Activated CD4-positive, alpha-beta T cell treated with anti-CD3 and anti-CD28 coated beads for 36 hours (primary cell): ENCODE measurements at regions of chr13 and their contacts with region 1.

Region 1: GRCh38 chr13:42497798-42498197 is 76.2 kb upstream of the TNFSF11 start:
- DNase-seq: peak; percentile 56
- ATAC-seq: peak; percentile 86
- H3K4me3 Mint-ChIP-seq: no peak overlapping the region
- H3K27ac Mint-ChIP-seq: peak overlapping the region; percentile 71
- H3K4me1 Mint-ChIP-seq: peaks cover 54% of the 10 kb centered on the region
- H3K27me3 Mint-ChIP-seq: no peaks in the 10 kb centered on the region

Region 2: DNA sequence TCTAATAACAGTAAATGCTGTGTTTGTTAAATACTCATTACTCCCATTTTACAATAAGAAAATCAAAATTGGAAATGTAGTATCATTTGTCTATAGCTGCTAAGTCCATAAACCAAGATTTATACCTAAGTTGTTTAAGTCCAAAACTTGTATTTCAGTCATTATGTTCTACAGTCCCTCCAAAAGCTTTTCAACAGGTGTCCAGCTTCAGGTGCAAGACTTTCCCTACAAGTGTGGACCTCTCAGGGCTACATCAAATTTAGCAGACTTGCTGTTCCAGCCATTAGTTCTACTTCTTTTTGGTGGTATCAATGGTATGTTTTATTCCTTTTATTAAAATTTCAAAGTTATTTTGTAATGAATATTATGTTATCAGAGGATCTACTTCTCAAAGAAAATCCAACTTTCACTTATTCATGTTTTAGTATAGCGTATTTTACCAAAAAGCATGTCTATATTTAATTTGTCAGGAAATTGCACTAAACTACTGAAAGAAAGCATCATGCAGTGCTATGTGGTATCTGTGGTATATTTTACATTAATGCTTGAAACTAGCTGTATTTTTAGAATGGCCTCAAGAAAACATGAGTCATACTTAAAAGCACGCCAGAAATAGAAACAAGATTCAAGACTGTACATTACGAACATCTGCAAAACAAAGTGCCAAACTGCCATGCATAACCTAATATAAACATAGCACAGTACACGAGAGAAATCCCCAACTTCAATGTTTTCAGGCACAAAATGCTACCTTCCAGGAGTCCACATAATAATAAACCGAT is 581.4 kb before region 1 on chr13:
- CTCF ChIA-PET with region 1: no interaction called
- POLR2A ChIA-PET with region 1: no interaction called
- intact Hi-C with region 1: loop called in 1 of 2 experiments (anchors 5 kb)
- DNase-seq: no peak
- ATAC-seq: peak; percentile 66
- H3K4me3 Mint-ChIP-seq: peak overlapping the region; percentile 57
- H3K27ac Mint-ChIP-seq: peak overlapping the region; percentile 97
- H3K4me1 Mint-ChIP-seq: peaks cover 67% of the 10 kb centered on the region
- H3K27me3 Mint-ChIP-seq: no peaks in the 10 kb centered on the region

Region 3: DNA sequence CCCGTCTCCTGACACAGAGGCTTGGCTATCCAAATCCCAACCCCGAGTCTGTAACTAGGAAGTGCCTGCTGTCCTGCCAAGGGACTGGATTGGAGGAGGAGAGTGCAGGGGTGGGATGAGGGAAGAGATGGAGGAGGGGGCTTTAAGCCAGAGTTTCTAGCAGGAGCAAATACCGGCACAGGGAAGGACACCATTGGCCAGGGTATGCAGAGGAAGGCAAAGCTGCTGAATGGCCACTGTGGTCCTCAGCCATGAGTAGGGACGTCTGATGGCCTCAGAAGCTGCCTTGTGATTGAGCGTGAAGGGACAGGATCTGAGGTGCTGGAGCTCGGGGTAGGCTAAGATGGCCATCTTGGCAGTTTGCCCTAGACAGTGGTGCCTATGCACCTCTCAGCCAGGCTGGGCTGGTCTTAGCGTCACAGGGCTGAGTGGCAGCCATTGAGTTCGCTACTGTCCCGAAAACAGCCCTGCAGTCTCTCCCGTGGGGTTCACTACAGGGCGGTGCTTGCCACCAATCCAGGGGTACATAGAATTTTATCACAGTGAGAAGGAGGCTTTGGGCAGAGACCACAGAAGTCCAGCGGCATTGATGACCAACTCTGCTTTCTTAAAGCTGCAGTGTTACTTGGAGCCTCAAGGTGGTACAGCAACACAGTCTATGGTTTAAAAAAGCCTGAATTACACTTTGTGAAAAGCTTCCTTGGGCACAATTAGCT is 164.0 kb before region 1 on chr13:
- CTCF ChIA-PET with region 1: interaction called, 3 read pairs
- POLR2A ChIA-PET with region 1: no interaction called
- intact Hi-C with region 1: loop called in 1 of 2 experiments (anchors 5 kb)
- DNase-seq: no peak
- ATAC-seq: peak; percentile 79
- H3K4me3 Mint-ChIP-seq: no peak overlapping the region
- H3K27ac Mint-ChIP-seq: peak overlapping the region; percentile 76
- H3K4me1 Mint-ChIP-seq: peaks cover 41% of the 10 kb centered on the region
- H3K27me3 Mint-ChIP-seq: no peaks in the 10 kb centered on the region

Region 4: GRCh38 chr13:42377640-42378382 is 120.0 kb before region 1 on chr13:
- CTCF ChIA-PET with region 1: interaction called, 7 read pairs
- POLR2A ChIA-PET with region 1: interaction called, 6 read pairs
- intact Hi-C with region 1: loop called (anchors 1 to 2 kb)
- DNase-seq: peak; percentile 60
- ATAC-seq: peak; percentile 83
- H3K4me3 Mint-ChIP-seq: no peak overlapping the region
- H3K27ac Mint-ChIP-seq: peak overlapping the region; percentile 97
- H3K4me1 Mint-ChIP-seq: peaks cover 74% of the 10 kb centered on the region
- H3K27me3 Mint-ChIP-seq: no peaks in the 10 kb centered on the region

Region 5: DNA sequence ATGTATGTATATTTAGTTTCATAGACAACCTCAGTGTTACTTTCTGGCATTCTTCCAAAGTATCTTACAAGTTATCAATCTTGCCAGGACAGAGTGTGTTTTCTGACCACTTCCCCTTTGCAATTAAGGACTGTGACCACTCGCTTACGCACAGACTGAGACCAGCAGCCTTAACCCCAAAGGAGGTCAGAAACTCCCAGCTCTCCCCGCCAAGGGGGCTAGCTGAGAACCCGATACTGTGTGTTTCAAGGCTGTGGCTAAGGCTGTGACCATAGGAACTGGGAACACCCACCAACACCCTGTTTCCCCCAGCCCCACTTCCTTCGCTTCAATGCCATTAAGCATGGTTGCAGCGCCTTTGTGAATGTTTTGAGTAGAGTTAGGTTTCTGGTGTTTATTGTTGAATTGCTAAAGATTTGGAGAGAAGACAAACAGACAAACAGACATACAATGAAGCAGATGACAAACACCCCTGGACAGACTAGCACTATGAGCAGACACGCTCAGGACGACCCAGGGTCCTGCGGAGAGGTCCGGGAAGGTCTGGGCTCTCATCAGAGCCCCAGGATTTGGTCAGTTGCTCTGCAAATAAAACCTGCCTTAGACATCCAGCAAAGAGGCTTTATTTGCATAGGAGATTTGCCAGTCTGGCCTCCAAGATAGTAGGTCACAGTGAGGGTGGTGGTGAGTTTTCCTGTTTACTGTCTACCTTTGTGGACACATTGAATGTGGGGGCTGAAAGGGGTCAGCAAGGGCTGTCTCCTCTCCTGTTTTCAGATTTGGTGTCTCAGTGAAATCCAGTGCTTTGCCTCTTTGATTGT is 51.1 kb after region 1 on chr13:
- CTCF ChIA-PET with region 1: no interaction called
- POLR2A ChIA-PET with region 1: interaction called, 3 read pairs
- intact Hi-C with region 1: loop called in 1 of 2 experiments (anchors 5 kb)
- DNase-seq: no peak
- ATAC-seq: no peak
- H3K4me3 Mint-ChIP-seq: no peak overlapping the region
- H3K27ac Mint-ChIP-seq: no peak overlapping the region
- H3K4me1 Mint-ChIP-seq: peaks cover 20% of the 10 kb centered on the region
- H3K27me3 Mint-ChIP-seq: peaks cover 2% of the 10 kb centered on the region

Region 6: DNA sequence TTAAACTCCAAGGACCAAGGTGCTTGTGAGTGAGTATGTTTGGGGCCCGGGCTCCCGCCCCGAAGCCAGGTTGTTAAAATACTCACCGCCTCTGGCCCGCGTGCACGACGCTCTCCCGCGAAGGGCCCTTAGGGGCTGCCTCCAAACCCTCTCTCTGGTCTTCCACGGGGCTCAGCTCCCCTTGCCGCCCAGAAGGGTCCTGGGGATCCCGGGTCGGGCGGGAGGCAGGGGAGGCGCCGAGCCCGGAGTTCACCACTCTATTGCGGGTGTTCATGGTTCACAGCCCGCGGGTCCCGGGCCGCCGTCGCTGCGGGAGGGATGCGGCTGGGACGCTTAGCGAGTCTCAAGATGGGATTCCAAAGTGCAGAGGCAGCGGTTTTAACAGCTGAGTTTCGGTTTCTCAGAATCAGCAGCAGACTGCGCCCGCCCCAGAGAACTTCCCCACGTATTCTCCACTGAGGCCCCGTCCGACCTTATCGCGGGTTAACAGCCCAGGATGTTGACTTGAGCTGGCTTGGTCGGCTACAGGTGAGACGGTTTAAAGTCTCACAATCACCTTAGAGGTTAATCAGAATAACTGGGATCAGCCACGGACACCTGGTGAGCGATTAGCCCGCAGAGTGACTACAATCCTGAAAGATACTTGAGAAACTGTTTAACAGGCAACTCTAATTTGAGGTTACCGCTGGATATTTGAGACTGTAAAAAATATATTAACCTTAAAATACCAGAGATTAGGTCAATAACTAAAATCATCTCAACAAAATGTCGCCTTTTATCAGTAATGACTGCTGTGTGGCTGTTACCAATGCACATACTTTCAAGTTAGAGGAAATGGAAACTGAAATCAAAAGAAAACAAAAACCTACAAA is 494.3 kb after region 1 on chr13 and contains the start of gene EPSTI1:
- CTCF ChIA-PET with region 1: no interaction called
- POLR2A ChIA-PET with region 1: no interaction called
- intact Hi-C with region 1: loop called in 1 of 2 experiments (anchors 1 kb)
- DNase-seq: peak; percentile 87
- ATAC-seq: peak; percentile 81
- H3K4me3 Mint-ChIP-seq: peak within 1 kb of the TSS; percentile 84
- H3K27ac Mint-ChIP-seq: peak within 1 kb of the TSS; percentile 99
- H3K4me1 Mint-ChIP-seq: peaks cover 45% of the 10 kb centered on the region
- H3K27me3 Mint-ChIP-seq: no peaks in the 10 kb centered on the region
- total RNA-seq, gene EPSTI1: 30.7 to 32.0 TPM

Region 7: DNA sequence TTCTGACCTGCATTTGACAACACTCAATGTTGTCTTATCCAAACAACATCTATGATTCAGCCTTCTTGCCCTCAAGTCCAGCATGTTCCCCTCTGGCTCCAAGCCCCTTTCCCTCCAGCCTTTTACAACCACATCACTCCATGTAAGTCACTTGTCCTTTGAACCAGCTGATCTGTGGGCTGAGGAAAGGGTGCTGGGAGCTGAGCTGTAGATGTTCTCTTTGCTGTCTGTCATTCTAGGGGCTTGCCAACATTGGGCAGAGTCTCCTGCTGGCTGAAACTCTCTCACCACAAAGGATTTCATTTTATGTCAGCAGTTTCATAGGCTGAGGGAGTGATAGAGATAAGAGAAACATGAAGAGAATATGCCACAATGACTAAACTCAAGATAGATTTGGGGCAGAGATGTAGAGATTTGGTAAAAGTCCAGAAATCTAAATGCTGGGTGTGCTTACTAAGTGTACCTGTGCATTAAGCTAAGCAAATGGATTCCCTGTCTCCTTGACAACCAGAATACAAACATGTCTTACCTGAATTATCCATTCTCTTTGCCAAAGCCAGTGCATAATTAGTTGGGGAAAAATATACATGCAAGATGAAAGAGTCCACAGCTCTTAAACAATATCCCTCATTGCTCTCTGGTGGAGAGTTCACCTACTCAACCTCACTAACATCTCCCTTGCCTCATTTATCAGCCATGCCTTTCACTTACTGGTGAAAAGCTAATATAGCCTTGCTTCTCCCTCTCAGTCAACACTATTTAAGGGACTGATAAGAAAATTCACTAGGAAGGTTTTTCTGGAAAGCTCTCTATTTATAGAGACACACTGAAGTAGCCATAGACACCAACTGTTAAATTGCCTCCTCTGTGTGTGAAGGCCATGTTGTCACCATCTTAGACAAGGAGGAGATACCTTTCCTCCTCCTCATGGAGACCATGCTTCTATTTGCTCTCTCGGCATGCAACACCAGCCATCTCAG is 1700.3 kb after region 1 on chr13:
- CTCF ChIA-PET with region 1: no interaction called
- POLR2A ChIA-PET with region 1: no interaction called
- intact Hi-C with region 1: loop called in 1 of 2 experiments (anchors 5 kb)
- DNase-seq: peak; percentile 65
- ATAC-seq: peak; percentile 91
- H3K4me3 Mint-ChIP-seq: no peak overlapping the region
- H3K27ac Mint-ChIP-seq: no peak overlapping the region
- H3K4me1 Mint-ChIP-seq: peaks cover 40% of the 10 kb centered on the region
- H3K27me3 Mint-ChIP-seq: peaks cover 28% of the 10 kb centered on the region